Naive thymus-derived CD4-positive, alpha-beta T cell (primary cell): ENCODE measurements at regions of chr2 and their contacts with region 1.

Region 1: GRCh38 chr2:62774555-62775366 is 69.2 kb downstream of the EHBP1 start:
- DNase-seq: peak in 5 of 9 donors; percentile 16 to 43 (median 33)
- ATAC-seq: peak; percentile 73
- H3K4me3 ChIP-seq: no peak overlapping the region
- H3K4me3 Mint-ChIP-seq: no peak overlapping the region
- H3K27ac ChIP-seq: no peak overlapping the region
- H3K27ac Mint-ChIP-seq: no peak overlapping the region
- H3K4me1 ChIP-seq: no peaks in the 10 kb centered on the region
- H3K4me1 Mint-ChIP-seq: peaks cover 0 to 10% (median 8%) of the 10 kb centered on the region in 7 donors
- H3K27me3 ChIP-seq: no peaks in the 10 kb centered on the region
- H3K27me3 Mint-ChIP-seq: no peaks in the 10 kb centered on the region

Region 2: DNA sequence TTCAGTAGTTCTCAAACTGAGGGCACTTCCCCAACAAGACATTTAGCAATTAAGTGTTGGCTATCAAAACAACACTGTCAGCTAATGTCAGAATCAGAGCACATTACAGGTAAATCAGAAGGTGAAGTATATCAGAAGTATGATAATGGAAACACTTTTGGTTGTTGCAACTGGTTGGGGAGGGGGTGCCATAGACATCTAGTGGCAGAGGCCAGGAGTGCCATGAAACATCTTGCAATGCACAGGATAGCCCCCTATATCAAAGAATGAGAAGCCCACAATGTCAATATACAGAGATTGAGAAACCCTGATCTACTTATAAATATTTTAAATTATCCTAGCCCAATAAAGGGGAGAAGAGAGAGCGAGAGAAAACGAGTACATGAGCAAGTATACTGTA is 1231.7 kb before region 1 on chr2:
- CTCF ChIA-PET with region 1: no interaction called
- POLR2A ChIA-PET with region 1: no interaction called
- intact Hi-C with region 1: no loop called
- DNase-seq: peak in 2 of 9 donors; percentile 14 to 20
- ATAC-seq: no peak
- H3K4me3 ChIP-seq: no peak overlapping the region
- H3K4me3 Mint-ChIP-seq: no peak overlapping the region
- H3K27ac ChIP-seq: no peak overlapping the region
- H3K27ac Mint-ChIP-seq: peak overlapping the region in 1 of 9 donors; percentile 55
- H3K4me1 ChIP-seq: peaks cover 5 to 8% of the 10 kb centered on the region in 2 donors
- H3K4me1 Mint-ChIP-seq: peaks cover 0 to 10% (median 8%) of the 10 kb centered on the region in 7 donors
- H3K27me3 ChIP-seq: no peaks in the 10 kb centered on the region
- H3K27me3 Mint-ChIP-seq: peaks cover 0 to 6% (median 0%) of the 10 kb centered on the region in 5 donors

Region 3: DNA sequence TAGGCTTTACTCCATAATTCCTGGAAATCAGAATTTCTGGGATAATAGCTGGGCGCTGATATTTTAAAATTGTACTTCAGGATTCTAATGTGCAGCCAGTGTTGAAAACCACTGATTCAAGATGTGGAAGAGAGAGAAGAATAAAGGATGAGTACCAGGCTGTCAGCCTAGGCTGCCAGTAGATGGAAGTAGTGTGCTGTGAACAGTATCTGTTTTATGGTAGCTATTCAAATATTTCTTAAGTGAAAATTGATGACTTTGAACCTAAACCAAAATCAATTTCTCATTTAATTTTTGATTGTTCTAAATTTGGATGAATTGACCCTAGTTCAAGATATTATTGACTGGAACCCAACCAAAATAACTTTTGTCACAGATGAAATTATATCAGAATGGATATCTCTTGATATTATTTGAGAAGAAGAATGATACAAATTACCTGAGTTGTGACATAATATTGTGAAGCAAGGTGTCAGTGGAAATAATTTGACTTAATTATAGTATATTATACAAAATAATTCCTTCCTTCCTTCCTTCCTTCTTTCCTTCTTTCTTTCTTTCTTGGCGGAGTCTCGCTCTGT is 781.2 kb before region 1 on chr2:
- CTCF ChIA-PET with region 1: no interaction called
- POLR2A ChIA-PET with region 1: no interaction called
- intact Hi-C with region 1: loop called in 1 of 2 experiments (anchors 5 kb)
- DNase-seq: peak in 3 of 9 donors; percentile 11 to 20 (median 12)
- ATAC-seq: peak; percentile 63
- H3K4me3 ChIP-seq: no peak overlapping the region
- H3K4me3 Mint-ChIP-seq: no peak overlapping the region
- H3K27ac ChIP-seq: no peak overlapping the region
- H3K27ac Mint-ChIP-seq: no peak overlapping the region
- H3K4me1 ChIP-seq: no peaks in the 10 kb centered on the region
- H3K4me1 Mint-ChIP-seq: peaks cover 5 to 13% (median 8%) of the 10 kb centered on the region in 7 donors
- H3K27me3 ChIP-seq: no peaks in the 10 kb centered on the region
- H3K27me3 Mint-ChIP-seq: no peaks in the 10 kb centered on the region

Region 4: GRCh38 chr2:62596061-62596921 is 178.5 kb before region 1 on chr2:
- CTCF ChIA-PET with region 1: no interaction called
- POLR2A ChIA-PET with region 1: no interaction called
- intact Hi-C with region 1: no loop called
- DNase-seq: no peak
- ATAC-seq: no peak
- H3K4me3 ChIP-seq: no peak overlapping the region
- H3K4me3 Mint-ChIP-seq: no peak overlapping the region
- H3K27ac ChIP-seq: no peak overlapping the region
- H3K27ac Mint-ChIP-seq: no peak overlapping the region
- H3K4me1 ChIP-seq: no peaks in the 10 kb centered on the region
- H3K4me1 Mint-ChIP-seq: no peaks in the 10 kb centered on the region
- H3K27me3 ChIP-seq: no peaks in the 10 kb centered on the region
- H3K27me3 Mint-ChIP-seq: peaks cover 0 to 8% (median 6%) of the 10 kb centered on the region in 5 donors